ENCODE measurements at regions of chr1 and their contacts with region 1.

Region 1: DNA sequence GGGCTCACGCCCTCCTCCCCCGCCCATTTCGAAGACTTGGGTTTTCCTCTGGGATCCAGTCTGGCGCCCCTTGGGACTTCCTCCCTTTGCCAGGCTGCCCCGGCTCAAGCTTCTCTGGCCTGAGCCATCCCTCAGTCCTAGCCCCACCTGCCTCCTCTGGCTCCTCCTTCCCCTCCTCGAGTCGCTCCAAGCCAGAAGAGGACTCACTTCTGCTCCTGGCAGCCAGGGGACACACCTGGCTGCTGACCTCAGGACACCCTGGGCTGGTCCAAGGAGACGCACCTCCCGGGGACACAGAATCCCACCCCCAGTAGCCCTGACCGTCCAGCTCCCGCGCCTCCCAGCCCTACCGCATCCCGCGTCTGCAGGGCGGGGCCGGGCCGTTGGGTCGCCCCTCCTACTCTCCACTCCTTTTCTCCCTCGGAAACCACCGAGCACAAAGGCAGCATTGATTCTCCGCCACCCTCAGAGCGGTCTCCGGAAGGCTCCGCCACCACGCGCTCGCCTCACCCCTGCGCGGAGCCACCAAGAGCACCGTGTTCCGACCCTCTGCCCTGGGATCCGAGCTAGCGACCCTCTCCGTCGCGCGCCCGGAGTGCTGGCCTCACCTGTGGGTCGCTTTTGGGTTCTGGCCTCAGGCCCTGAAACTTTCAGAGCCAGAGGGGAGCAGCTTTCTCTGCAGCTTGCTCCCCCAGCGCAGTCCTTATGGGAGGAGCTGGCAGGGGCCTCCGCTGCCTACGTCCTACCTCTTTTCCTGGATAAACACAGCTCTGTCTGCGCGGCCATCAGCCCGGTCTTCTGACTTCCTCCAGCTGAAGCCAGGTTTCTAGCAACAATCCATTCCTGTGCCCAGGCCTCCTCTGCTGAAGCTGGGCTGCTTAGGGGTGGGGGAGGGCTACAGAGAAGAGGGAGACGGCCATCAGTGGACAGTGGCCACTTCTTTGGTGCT is at the start of gene C2CD4D:
- DNase-seq: peak in 2 of 4 experiments; percentile 31 to 39
- ATAC-seq: no peak
- H3K4me3 ChIP-seq: no peak within 1 kb of the TSS
- H3K27ac ChIP-seq: no peak within 1 kb of the TSS
- H3K4me1 ChIP-seq: peaks cover 0 to 13% of the 10 kb centered on the region in 2 experiments; a peak in 2 of 5 replicates
- H3K27me3 ChIP-seq: peaks cover 4 to 12% of the 10 kb centered on the region in 2 experiments; a peak in 3 of 5 replicates
- CTCF ChIP-seq: no peak
- EP300 ChIP-seq: no peak
- POLR2A ChIP-seq: no peak
- RAD21 ChIP-seq: no peak
- polyA plus RNA-seq, gene C2CD4D: not detected

Region 2: DNA sequence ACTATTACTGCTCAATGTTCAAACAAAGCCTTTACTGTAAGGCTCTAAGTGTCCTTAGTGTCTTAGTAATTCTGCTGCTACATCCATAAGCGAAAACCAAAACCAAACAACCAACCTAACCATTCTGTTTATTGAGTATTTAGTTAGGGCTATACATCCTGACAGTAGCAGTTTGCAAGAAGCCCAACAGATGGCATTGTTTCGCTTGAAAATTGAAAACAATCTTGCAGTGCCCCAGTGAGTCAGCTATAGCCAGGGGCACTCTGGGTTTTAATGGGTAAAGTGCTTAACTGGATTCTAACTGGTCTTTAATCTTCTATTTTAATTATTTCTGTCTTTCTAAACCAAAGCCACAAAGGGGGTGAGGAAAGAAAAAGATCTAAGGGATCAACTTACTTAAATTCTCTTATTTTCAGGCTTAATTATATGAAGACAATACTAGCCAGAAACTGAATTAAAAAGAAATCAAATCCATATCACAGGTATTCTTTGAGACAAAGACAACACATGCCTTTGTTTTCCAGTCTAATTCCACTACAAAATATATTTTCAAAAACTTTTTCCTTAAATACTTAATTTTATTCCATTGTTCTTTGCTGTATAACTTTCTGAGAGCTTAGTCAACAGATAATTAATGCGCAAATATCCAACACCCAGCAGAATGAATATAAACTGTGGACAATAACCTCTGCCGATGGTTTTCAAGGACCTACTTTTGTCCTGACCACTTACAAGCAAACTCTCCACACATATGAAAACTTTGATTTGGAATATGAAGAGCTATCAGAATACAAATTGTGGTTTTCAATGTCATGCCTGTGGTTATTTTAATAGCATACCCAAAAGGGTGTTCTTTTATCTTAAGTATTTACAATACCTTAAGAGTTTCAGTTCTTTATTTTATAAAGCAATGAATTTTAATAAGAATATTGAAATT is 395.6 kb before region 1 on chr1:
- CTCF ChIA-PET with region 1: interaction called, 13 read pairs
- POLR2A ChIA-PET with region 1: no interaction called
- in situ Hi-C with region 1: no loop called
- intact Hi-C with region 1: no loop called
- DNase-seq: peak; percentile 54 to 73 (median 62)
- ATAC-seq: peak; percentile 96
- H3K4me3 ChIP-seq: no peak overlapping the region
- H3K27ac ChIP-seq: no peak overlapping the region
- H3K4me1 ChIP-seq: peaks cover 0 to 3% of the 10 kb centered on the region in 2 experiments; a peak in 2 of 5 replicates
- H3K27me3 ChIP-seq: no peaks in the 10 kb centered on the region
- CTCF ChIP-seq: peak; percentile 71 to 88 (median 78)
- EP300 ChIP-seq: no peak
- POLR2A ChIP-seq: no peak
- RAD21 ChIP-seq: peak; percentile 82 to 83

Region 3: DNA sequence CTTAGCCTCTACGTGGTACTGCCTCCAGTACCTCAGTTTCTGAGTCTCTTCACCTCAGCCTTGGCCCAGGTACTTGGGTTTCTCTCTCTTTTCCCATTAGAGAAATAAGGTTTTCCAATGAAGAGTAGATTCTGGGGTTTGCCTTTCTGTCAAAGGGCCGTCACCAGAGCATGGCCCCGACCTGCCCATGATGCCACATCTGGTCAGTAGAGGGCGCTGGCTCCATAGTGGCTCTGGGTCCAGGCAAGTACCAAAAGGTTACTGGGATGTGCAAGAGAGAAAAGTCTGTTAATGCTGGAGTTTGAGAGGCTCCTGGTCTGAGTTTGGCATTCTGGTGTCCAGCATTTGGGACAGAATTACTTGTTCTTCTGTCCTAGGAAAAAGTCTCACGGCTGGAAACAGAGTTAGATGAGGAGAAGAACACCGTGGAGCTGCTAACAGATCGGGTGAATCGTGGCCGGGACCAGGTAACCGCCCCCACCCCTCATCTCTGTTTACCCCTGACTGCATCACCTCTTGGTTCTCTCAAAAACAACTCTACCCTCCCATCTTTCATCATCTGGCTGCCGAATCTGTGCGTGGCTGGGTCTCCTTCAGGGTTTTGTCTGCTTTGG is 305.0 kb before region 1 on chr1:
- CTCF ChIA-PET with region 1: interaction called, 3 read pairs
- POLR2A ChIA-PET with region 1: interaction called, 3 read pairs
- in situ Hi-C with region 1: no loop called
- intact Hi-C with region 1: loop called (anchors 1 kb)
- DNase-seq: peak; percentile 76 to 84 (median 80)
- ATAC-seq: peak; percentile 86
- H3K4me3 ChIP-seq: no peak overlapping the region
- H3K27ac ChIP-seq: no peak overlapping the region
- H3K4me1 ChIP-seq: peaks cover 7 to 17% of the 10 kb centered on the region in 2 experiments; a peak in 4 of 5 replicates
- H3K27me3 ChIP-seq: peaks cover 17 to 20% of the 10 kb centered on the region in 2 experiments; a peak in 4 of 5 replicates
- CTCF ChIP-seq: peak; percentile 89 to 95 (median 95)
- EP300 ChIP-seq: no peak
- POLR2A ChIP-seq: no peak
- RAD21 ChIP-seq: peak; percentile 87 to 90

Region 4: DNA sequence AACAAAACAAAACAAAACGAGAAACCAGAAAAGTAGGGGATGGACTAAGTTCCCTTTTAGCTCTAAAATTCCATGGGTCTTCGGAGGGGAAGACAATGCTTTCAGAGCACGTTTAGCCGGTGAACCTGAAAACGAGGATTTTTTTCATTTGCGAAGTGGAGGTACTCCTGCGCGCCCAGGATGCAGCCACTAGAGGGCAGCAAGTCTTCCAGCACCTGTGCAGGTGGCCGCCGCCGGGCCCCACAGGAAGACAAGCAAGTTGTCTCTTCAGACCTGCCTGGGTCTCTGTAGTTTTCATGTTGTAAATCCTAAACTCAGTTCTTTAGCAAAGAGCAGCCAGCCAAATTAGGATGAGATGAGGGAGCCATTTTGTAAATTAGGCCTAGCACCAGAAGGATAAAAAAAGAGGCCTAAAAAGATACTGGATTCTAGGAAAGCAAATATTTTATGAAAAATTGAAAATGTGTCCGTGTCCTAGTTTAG is 245.5 kb before region 1 on chr1:
- CTCF ChIA-PET with region 1: interaction called, 6 read pairs
- POLR2A ChIA-PET with region 1: no interaction called
- in situ Hi-C with region 1: no loop called
- intact Hi-C with region 1: loop called (anchors 5 kb)
- DNase-seq: peak; percentile 74 to 83 (median 78)
- ATAC-seq: peak; percentile 91
- H3K4me3 ChIP-seq: no peak overlapping the region
- H3K27ac ChIP-seq: no peak overlapping the region
- H3K4me1 ChIP-seq: peaks cover 11 to 20% of the 10 kb centered on the region in 2 experiments
- H3K27me3 ChIP-seq: no peaks in the 10 kb centered on the region
- CTCF ChIP-seq: peak; percentile 89 to 97 (median 89)
- EP300 ChIP-seq: no peak
- POLR2A ChIP-seq: no peak
- RAD21 ChIP-seq: peak; percentile 59 to 81

Region 5: GRCh38 chr1:151693076-151693651 is 146.6 kb before region 1 on chr1:
- CTCF ChIA-PET with region 1: interaction called, 26 read pairs
- POLR2A ChIA-PET with region 1: interaction called, 3 read pairs
- in situ Hi-C with region 1: loop called (anchors 5 kb)
- intact Hi-C with region 1: loop called (anchors 1 kb)
- DNase-seq: peak in 2 of 4 experiments; percentile 32 to 40
- ATAC-seq: peak; percentile 74
- H3K4me3 ChIP-seq: no peak overlapping the region
- H3K27ac ChIP-seq: no peak overlapping the region
- H3K4me1 ChIP-seq: no peaks in the 10 kb centered on the region
- H3K27me3 ChIP-seq: no peaks in the 10 kb centered on the region
- CTCF ChIP-seq: peak; percentile 74 to 80 (median 78)
- EP300 ChIP-seq: no peak
- POLR2A ChIP-seq: no peak
- RAD21 ChIP-seq: peak; percentile 69 to 85

Region 6: DNA sequence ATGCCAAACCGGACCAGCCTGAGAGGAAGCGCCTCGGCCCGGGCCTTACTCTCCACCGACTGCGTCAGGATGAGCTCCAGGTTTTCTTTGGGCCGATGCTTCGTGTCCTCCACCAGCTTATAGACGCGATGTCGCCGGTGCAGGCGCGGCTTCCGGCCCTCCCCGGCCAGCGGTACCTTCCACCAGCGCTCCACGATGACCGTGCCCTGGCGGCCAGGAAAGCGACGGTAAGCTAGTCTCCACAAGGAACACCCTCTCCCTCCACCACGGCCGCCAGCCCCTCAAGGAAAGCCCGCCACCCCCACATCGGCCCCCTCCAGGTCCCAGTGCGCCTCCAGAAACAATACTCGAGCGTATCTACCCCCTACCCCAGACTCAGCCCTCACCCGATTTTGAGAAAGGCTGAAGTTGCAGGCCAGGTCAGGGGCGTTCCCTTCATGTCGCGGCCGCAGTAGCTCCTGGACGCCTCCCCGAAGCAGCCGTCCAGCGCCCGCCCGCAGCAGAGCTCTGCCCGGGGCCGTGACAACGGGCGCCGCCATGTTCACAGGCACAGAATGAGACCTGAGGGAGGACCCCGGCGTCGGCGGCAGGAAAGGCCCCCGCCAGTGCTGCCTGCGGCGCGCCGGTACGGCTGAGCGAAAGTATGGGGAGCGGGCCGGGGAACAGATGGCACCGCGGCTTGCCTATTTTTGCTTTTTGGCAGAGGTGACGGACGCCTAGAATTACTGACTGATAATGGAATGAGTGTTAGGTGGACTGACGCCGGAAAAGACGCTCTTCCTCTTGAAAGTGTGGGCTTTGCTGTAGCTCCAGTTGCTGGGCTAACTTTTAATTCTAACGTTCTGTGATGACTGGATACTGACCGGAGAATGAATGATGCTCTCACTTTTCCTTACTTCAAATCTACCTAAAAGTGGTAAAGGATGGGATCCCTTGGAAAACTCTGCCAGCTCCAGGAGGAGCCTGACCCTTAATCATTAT is 76.5 kb before region 1 on chr1 and contains the start of gene MRPL9:
- CTCF ChIA-PET with region 1: no interaction called
- POLR2A ChIA-PET with region 1: no interaction called
- in situ Hi-C with region 1: no loop called
- intact Hi-C with region 1: no loop called
- DNase-seq: peak; percentile 88 to 92 (median 91)
- ATAC-seq: peak; percentile 99
- H3K4me3 ChIP-seq: peak within 1 kb of the TSS; percentile 95
- H3K27ac ChIP-seq: peak within 1 kb of the TSS; percentile 88
- H3K4me1 ChIP-seq: peaks cover 3 to 8% of the 10 kb centered on the region in 2 experiments; a peak in 2 of 5 replicates
- H3K27me3 ChIP-seq: no peaks in the 10 kb centered on the region
- CTCF ChIP-seq: no peak; a peak in 1 of 6 replicates
- EP300 ChIP-seq: no peak
- POLR2A ChIP-seq: peak; percentile 87
- RAD21 ChIP-seq: peak; percentile 17 to 36; a peak in 2 of 4 replicates
- polyA plus RNA-seq, gene MRPL9: 38.0 to 57.0 TPM

Measured in K562 (cell line).